ENCODE measurements at regions of chr2 and their contacts with region 1.

Region 1: GRCh38 chr2:79087785-79088364 is at the start of gene REG1B:
- DNase-seq: peak in 5 of 6 donors; percentile 45 to 92 (median 70)
- ATAC-seq: peak; percentile 51 to 78 (median 60)
- H3K4me3 ChIP-seq: peak within 1 kb of the TSS in 3 of 4 donors; percentile 14 to 48 (median 31)
- H3K27ac ChIP-seq: peak within 1 kb of the TSS; percentile 48 to 87 (median 66)
- H3K4me1 ChIP-seq: peaks cover 0 to 7% (median 0%) of the 10 kb centered on the region in 3 donors
- H3K27me3 ChIP-seq: no peaks in the 10 kb centered on the region
- CTCF ChIP-seq: no peak
- total RNA-seq, gene REG1B: 3,724 to 34,839 (median 13,358) TPM

Region 2: GRCh38 chr2:78780256-78780655 is 307.6 kb before region 1 on chr2:
- intact Hi-C with region 1: no loop called
- DNase-seq: peak in 1 of 6 donors; percentile 33
- ATAC-seq: peak in 3 of 4 donors; percentile 51 to 91 (median 90)
- H3K4me3 ChIP-seq: no peak overlapping the region
- H3K27ac ChIP-seq: peak overlapping the region in 1 of 4 donors; percentile 9
- H3K4me1 ChIP-seq: peaks cover 0 to 11% (median 0%) of the 10 kb centered on the region in 3 donors
- H3K27me3 ChIP-seq: no peaks in the 10 kb centered on the region
- CTCF ChIP-seq: no peak

Region 3: GRCh38 chr2:79120194-79120713 is 32.4 kb after region 1 on chr2 and contains the start of gene REG1A:
- intact Hi-C with region 1: loop called in 1 of 3 experiments (anchors 5 kb)
- DNase-seq: peak; percentile 67 to 95 (median 89)
- ATAC-seq: peak; percentile 31 to 63 (median 51)
- H3K4me3 ChIP-seq: peak within 1 kb of the TSS; percentile 32 to 60 (median 50)
- H3K27ac ChIP-seq: peak within 1 kb of the TSS; percentile 67 to 94 (median 86)
- H3K4me1 ChIP-seq: peaks cover 13 to 37% (median 18%) of the 10 kb centered on the region in 3 donors
- H3K27me3 ChIP-seq: no peaks in the 10 kb centered on the region
- CTCF ChIP-seq: no peak
- total RNA-seq, gene REG1A: 22,488 to 42,835 (median 29,951) TPM